Body of pancreas (tissue), 4 donors: ENCODE measurements at regions of chr5 and their contacts with region 1.

Region 1: GRCh38 chr5:59380350-59380951 is 513.1 kb downstream of the PDE4D start:
- DNase-seq: no peak
- ATAC-seq: peak; percentile 66
- H3K4me3 ChIP-seq: no peak overlapping the region
- H3K27ac ChIP-seq: no peak overlapping the region
- H3K4me1 ChIP-seq: no peaks in the 10 kb centered on the region
- H3K27me3 ChIP-seq: no peaks in the 10 kb centered on the region
- CTCF ChIP-seq: peak in 6 of 7 experiments; percentile 43 to 67 (median 62)
- POLR2A ChIP-seq: no peak

Region 2: GRCh38 chr5:59133682-59134261 is 246.7 kb before region 1 on chr5:
- intact Hi-C with region 1: no loop called
- DNase-seq: no peak
- ATAC-seq: no peak
- H3K4me3 ChIP-seq: no peak overlapping the region
- H3K27ac ChIP-seq: no peak overlapping the region
- H3K4me1 ChIP-seq: no peaks in the 10 kb centered on the region
- H3K27me3 ChIP-seq: no peaks in the 10 kb centered on the region
- CTCF ChIP-seq: no peak
- POLR2A ChIP-seq: no peak

Region 3: DNA sequence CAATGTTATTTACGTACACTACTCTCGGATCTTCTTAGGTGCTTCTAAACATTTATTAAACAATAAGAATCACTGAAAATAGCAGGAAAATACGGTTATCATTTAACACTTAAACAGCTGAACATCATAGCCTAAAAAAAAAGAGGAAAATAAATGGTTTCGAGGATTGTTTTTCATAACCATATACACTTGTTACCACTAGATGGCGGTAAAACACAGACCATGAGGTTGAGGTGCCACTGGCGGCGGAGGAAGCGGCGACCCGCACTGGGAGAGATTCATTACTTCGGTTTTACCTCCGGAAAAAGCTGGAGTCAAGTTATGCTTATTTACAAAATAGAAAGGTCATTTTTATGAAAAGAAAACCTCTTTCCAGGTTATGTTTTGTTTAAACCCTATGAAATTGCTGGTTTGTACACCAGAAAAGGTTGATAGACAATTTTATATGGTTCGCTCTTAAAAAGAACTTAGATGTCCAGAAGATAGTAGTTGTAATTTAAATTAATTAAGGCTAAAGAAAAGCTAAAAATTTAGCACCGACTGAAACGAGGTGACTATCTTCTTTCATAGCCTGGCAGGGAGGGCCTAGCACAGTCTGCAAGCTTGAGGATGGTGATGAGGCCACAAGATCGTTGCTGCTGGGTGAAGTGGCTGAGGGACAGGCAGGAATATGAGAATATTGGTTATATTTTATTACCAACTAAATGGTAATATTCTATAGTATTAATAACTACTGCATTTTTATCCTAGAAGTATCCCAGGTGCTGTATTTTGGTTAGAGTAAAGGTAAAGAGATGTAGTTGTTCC is 191.8 kb before region 1 on chr5:
- intact Hi-C with region 1: loop called (anchors 5 kb)
- DNase-seq: peak; percentile 68 to 80 (median 76)
- ATAC-seq: peak; percentile 79
- H3K4me3 ChIP-seq: no peak overlapping the region
- H3K27ac ChIP-seq: no peak overlapping the region
- H3K4me1 ChIP-seq: peaks cover 8% of the 10 kb centered on the region
- H3K27me3 ChIP-seq: no peaks in the 10 kb centered on the region
- CTCF ChIP-seq: peak; percentile 64 to 89 (median 85)
- POLR2A ChIP-seq: no peak